Endothelial cell of umbilical vein (primary cell): ENCODE measurements at regions of chr6 and their contacts with region 1.

Region 1: DNA sequence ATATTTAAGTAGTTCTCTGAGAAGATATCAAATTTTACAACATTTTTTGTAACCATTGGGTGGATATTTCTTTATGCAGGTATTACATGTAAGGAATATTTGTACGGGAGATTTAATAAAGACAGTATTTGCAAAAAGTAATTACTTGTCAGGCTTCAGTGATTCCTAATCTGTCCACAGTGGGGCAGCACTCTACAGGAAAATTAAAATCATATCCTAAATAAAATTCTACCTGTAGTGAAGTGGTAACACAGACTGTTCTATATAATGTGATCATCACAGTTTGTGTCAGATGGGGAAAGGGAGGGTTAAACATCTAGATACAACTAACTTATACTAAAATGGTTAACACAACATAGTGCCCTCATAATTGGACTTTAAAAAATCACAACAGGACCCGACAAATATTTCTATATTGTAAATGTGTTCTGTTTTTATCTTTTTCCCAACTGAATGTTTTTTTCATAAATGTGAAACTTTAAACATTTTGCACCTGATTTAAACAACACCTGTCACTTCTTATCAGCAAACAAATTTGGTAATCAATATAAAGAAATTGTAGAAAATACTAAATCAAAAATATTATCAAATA is 145.6 kb upstream of the MANEA start:
- DNase-seq: peak; percentile 64
- H3K4me3 ChIP-seq: no peak overlapping the region
- H3K27ac ChIP-seq: no peak overlapping the region
- H3K4me1 ChIP-seq: no peaks in the 10 kb centered on the region
- H3K27me3 ChIP-seq: no peaks in the 10 kb centered on the region
- CTCF ChIP-seq: peak; percentile 31 to 33
- POLR2A ChIP-seq: no peak

Region 2: GRCh38 chr6:95408111-95408510 is 23.6 kb before region 1 on chr6:
- CTCF ChIA-PET with region 1: no interaction called
- POLR2A ChIA-PET with region 1: no interaction called
- dilution Hi-C with region 1: no loop called
- intact Hi-C with region 1: no loop called
- DNase-seq: no peak
- H3K4me3 ChIP-seq: no peak overlapping the region
- H3K27ac ChIP-seq: no peak overlapping the region
- H3K4me1 ChIP-seq: no peaks in the 10 kb centered on the region
- H3K27me3 ChIP-seq: no peaks in the 10 kb centered on the region
- CTCF ChIP-seq: no peak
- POLR2A ChIP-seq: no peak

Region 3: GRCh38 chr6:95511404-95511803 is 79.7 kb after region 1 on chr6:
- CTCF ChIA-PET with region 1: no interaction called
- POLR2A ChIA-PET with region 1: no interaction called
- dilution Hi-C with region 1: no loop called
- intact Hi-C with region 1: no loop called
- DNase-seq: no peak
- H3K4me3 ChIP-seq: no peak overlapping the region
- H3K27ac ChIP-seq: no peak overlapping the region
- H3K4me1 ChIP-seq: no peaks in the 10 kb centered on the region
- H3K27me3 ChIP-seq: no peaks in the 10 kb centered on the region
- CTCF ChIP-seq: no peak
- POLR2A ChIP-seq: no peak

Region 4: GRCh38 chr6:95577304-95578105 is 145.8 kb after region 1 on chr6 and contains the start of gene MANEA:
- CTCF ChIA-PET with region 1: no interaction called
- POLR2A ChIA-PET with region 1: no interaction called
- dilution Hi-C with region 1: no loop called
- intact Hi-C with region 1: loop called (anchors 1 kb)
- DNase-seq: peak; percentile 84
- H3K4me3 ChIP-seq: peak within 1 kb of the TSS; percentile 57 to 100 (median 98)
- H3K27ac ChIP-seq: peak within 1 kb of the TSS; percentile 86
- H3K4me1 ChIP-seq: peaks cover 30% of the 10 kb centered on the region
- H3K27me3 ChIP-seq: no peaks in the 10 kb centered on the region
- CTCF ChIP-seq: peak in 1 of 2 donors; percentile 0
- POLR2A ChIP-seq: peak; percentile 77
- total RNA-seq, gene MANEA: 17.7 and 18.5 TPM in 2 replicates

Region 5: GRCh38 chr6:95866732-95867131 is 435.0 kb after region 1 on chr6:
- CTCF ChIA-PET with region 1: no interaction called
- POLR2A ChIA-PET with region 1: no interaction called
- dilution Hi-C with region 1: no loop called
- intact Hi-C with region 1: loop called (anchors 2 kb)
- DNase-seq: no peak
- H3K4me3 ChIP-seq: no peak overlapping the region
- H3K27ac ChIP-seq: no peak overlapping the region
- H3K4me1 ChIP-seq: no peaks in the 10 kb centered on the region
- H3K27me3 ChIP-seq: no peaks in the 10 kb centered on the region
- CTCF ChIP-seq: no peak
- POLR2A ChIP-seq: no peak

Region 6: GRCh38 chr6:95923518-95923917 is 491.8 kb after region 1 on chr6:
- CTCF ChIA-PET with region 1: no interaction called
- POLR2A ChIA-PET with region 1: no interaction called
- dilution Hi-C with region 1: no loop called
- intact Hi-C with region 1: loop called (anchors 10 kb)
- DNase-seq: no peak
- H3K4me3 ChIP-seq: no peak overlapping the region
- H3K27ac ChIP-seq: no peak overlapping the region
- H3K4me1 ChIP-seq: no peaks in the 10 kb centered on the region
- H3K27me3 ChIP-seq: no peaks in the 10 kb centered on the region
- CTCF ChIP-seq: no peak
- POLR2A ChIP-seq: no peak

Region 7: GRCh38 chr6:96521644-96522464 is 1090.1 kb after region 1 on chr6 and contains the start of gene UFL1:
- CTCF ChIA-PET with region 1: no interaction called
- POLR2A ChIA-PET with region 1: no interaction called
- dilution Hi-C with region 1: no loop called
- intact Hi-C with region 1: loop called (anchors 5 kb)
- DNase-seq: peak; percentile 95
- H3K4me3 ChIP-seq: peak within 1 kb of the TSS; percentile 63 to 99 (median 98)
- H3K27ac ChIP-seq: peak within 1 kb of the TSS; percentile 92
- H3K4me1 ChIP-seq: peaks cover 16% of the 10 kb centered on the region
- H3K27me3 ChIP-seq: no peaks in the 10 kb centered on the region
- CTCF ChIP-seq: no peak
- POLR2A ChIP-seq: peak; percentile 98
- total RNA-seq, gene UFL1: 18.3 and 19.6 TPM in 2 replicates

Region 8: DNA sequence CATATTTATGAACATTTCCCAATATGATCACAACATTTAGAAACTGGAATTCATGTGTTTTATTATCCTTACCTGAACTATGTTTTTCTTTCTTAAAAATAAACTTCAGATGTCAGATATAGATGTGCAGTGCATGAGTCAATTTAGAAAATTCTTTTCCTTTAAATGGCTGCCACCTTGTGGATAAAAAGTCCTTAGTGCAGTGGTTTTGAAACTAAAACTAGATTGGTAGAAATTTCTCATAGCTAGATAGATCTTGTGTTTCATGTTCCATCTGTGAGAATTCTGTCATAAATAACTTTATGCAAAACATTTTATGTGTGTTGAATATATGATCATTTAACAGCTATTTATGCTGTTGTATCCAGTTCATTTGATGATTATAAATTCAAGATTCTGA is 1627.7 kb after region 1 on chr6:
- CTCF ChIA-PET with region 1: no interaction called
- POLR2A ChIA-PET with region 1: no interaction called
- dilution Hi-C with region 1: no loop called
- intact Hi-C with region 1: loop called (anchors 2 kb)
- DNase-seq: peak; percentile 30
- H3K4me3 ChIP-seq: no peak overlapping the region
- H3K27ac ChIP-seq: no peak overlapping the region
- H3K4me1 ChIP-seq: no peaks in the 10 kb centered on the region
- H3K27me3 ChIP-seq: peaks cover 10 to 13% of the 10 kb centered on the region in 2 experiments
- CTCF ChIP-seq: peak; percentile 13 to 21
- POLR2A ChIP-seq: no peak